ENCODE measurements at regions of chr16 and their contacts with region 1.

Region 1: DNA sequence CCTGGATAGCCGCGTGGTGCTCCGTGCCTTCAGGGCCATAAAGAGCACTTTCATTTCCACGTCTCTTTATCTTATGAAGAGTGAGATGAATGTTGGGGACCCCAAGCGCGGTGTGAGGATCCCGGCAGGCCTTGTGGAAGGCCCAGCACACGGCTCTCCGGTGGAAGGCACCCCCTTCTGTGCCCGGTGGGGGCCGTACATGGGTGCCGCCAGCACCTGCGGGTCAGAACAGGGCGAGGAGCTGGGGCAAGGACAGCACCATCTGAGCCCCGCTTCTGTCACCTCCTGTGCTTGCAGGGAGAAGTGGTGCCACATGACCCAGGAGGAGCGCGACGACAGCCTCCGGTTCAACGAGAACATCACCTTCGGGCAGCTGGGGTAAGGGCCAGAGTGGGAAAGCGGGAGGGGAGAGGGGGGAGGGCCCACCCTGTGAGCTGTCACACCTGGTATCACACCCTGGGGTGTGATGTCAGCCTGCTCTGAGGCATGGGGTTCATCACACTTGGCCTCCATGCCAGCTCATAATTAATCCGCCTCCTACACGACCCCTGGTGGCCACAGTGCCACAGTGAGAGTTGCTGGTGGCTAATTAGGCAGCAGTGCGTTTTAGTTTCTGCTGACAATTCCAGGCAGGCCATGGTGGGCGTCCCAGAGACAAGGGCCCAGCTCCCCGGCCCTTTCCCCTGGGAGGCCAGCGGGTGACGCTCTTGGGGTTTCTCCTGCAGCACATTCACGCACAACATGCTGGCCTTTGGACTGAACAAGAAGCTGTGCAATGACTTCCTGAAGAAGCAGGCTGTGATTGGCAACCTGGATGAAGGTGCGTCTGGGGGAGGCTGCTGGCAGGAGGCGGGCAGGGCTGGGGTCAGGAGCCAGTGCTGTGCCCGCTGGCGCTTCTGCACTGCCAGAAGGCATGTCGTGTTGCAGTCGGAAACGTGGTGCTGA is 25.7 kb downstream of the CIBAR2 start:
- DNase-seq: peak; percentile 80 to 82
- H3K4me3 ChIP-seq: no peak overlapping the region
- H3K4me3 Mint-ChIP-seq: no peak overlapping the region
- H3K27ac Mint-ChIP-seq: no peak overlapping the region
- H3K4me1 ChIP-seq: 0 out of 2 replicates have a peak, but pooled peaks cover 4% of the 10 kb centered on the region
- H3K4me1 Mint-ChIP-seq: no peaks in the 10 kb centered on the region
- H3K27me3 ChIP-seq: no peaks in the 10 kb centered on the region
- H3K27me3 Mint-ChIP-seq: no peaks in the 10 kb centered on the region
- CTCF ChIP-seq: peak; percentile 80 to 84

Region 2: DNA sequence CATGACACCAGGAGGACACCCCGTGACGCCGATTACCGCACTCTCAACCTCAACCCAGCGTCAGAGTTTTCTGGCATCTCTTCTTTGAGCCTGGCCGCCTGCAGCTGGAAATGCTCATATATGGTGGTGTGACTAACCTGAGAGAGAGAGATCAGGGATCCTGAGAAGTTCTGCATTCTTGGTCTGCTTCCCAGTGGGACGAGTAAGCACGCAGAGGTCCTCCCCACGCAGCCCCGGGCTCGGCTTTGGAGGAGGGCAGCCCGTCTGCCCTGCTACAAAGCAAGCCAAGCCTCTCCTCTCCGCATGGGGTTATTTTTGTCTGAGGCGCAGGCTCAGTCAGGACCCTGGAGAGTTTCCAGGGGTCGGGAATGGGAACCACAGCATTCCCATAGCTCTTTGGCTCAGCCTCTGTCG is 250.4 kb before region 1 on chr16:
- CTCF ChIA-PET with region 1: no interaction called
- POLR2A ChIA-PET with region 1: no interaction called
- intact Hi-C with region 1: no loop called
- DNase-seq: no peak
- H3K4me3 ChIP-seq: no peak overlapping the region
- H3K4me3 Mint-ChIP-seq: no peak overlapping the region
- H3K27ac Mint-ChIP-seq: no peak overlapping the region
- H3K4me1 ChIP-seq: no peaks in the 10 kb centered on the region
- H3K4me1 Mint-ChIP-seq: no peaks in the 10 kb centered on the region
- H3K27me3 ChIP-seq: no peaks in the 10 kb centered on the region
- H3K27me3 Mint-ChIP-seq: peaks cover 3% of the 10 kb centered on the region
- CTCF ChIP-seq: no peak

Region 3: DNA sequence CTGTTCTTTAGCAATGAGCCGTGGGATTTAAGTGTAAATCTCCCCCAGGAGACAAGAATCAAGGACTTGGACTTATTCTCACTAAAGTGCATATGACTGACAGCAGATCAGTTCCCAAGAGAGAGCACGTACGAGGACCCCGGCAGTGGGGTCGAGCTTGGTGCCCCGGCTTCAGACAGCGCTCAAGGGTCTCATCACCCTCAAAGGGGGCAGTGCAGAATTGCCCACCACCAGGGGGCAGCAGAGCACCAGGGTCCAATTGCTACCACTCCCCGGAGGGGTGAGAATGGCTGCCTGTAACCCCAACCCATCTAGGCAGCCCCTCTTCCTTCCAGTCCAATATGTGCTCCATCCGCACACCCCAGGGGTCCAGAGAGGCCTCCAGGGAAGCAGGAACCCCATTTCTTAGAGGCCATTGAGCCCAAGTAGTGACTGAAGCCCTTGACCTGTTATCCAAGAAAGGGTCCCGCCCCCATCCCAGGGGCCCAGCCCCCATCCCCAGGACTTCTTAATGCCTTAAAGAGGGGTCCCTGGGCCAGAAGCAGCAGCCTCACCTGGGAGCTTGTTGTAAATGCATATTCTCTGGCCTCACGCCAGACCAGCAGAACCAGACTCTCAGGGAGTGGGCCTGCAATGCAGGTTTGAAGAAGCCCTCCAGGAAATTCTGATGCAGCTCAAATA is 161.4 kb before region 1 on chr16:
- CTCF ChIA-PET with region 1: interaction called, 4 read pairs
- POLR2A ChIA-PET with region 1: no interaction called
- intact Hi-C with region 1: loop called (anchors 1 kb)
- DNase-seq: peak; percentile 76 to 87
- H3K4me3 ChIP-seq: no peak overlapping the region
- H3K4me3 Mint-ChIP-seq: no peak overlapping the region
- H3K27ac Mint-ChIP-seq: no peak overlapping the region
- H3K4me1 ChIP-seq: peaks cover 16% of the 10 kb centered on the region
- H3K4me1 Mint-ChIP-seq: peaks cover 8% of the 10 kb centered on the region
- H3K27me3 ChIP-seq: no peaks in the 10 kb centered on the region
- H3K27me3 Mint-ChIP-seq: no peaks in the 10 kb centered on the region
- CTCF ChIP-seq: peak; percentile 94 to 97

Region 4: GRCh38 chr16:84982434-84982833 is 104.2 kb before region 1 on chr16:
- CTCF ChIA-PET with region 1: interaction called, 15 read pairs
- POLR2A ChIA-PET with region 1: no interaction called
- intact Hi-C with region 1: loop called (anchors 2 kb)
- DNase-seq: peak in 1 of 2 experiments; percentile 27
- H3K4me3 ChIP-seq: no peak overlapping the region
- H3K4me3 Mint-ChIP-seq: no peak overlapping the region
- H3K27ac Mint-ChIP-seq: peak overlapping the region; percentile 11
- H3K4me1 ChIP-seq: no peaks in the 10 kb centered on the region
- H3K4me1 Mint-ChIP-seq: no peaks in the 10 kb centered on the region
- H3K27me3 ChIP-seq: no peaks in the 10 kb centered on the region
- H3K27me3 Mint-ChIP-seq: no peaks in the 10 kb centered on the region
- CTCF ChIP-seq: peak in 1 of 2 experiments; percentile 20

Region 5: GRCh38 chr16:84995663-84996062 is 91.0 kb before region 1 on chr16:
- CTCF ChIA-PET with region 1: interaction called, 16 read pairs
- POLR2A ChIA-PET with region 1: no interaction called
- intact Hi-C with region 1: no loop called
- DNase-seq: no peak
- H3K4me3 ChIP-seq: no peak overlapping the region
- H3K4me3 Mint-ChIP-seq: peak overlapping the region; percentile 62
- H3K27ac Mint-ChIP-seq: peak overlapping the region; percentile 98
- H3K4me1 ChIP-seq: peaks cover 45% of the 10 kb centered on the region
- H3K4me1 Mint-ChIP-seq: peaks cover 45% of the 10 kb centered on the region
- H3K27me3 ChIP-seq: no peaks in the 10 kb centered on the region
- H3K27me3 Mint-ChIP-seq: no peaks in the 10 kb centered on the region
- CTCF ChIP-seq: no peak

Region 6: GRCh38 chr16:85010931-85011845 is 75.4 kb before region 1 on chr16 and contains the start of gene ZDHHC7:
- CTCF ChIA-PET with region 1: interaction called, 12 read pairs
- POLR2A ChIA-PET with region 1: no interaction called
- intact Hi-C with region 1: loop called (anchors 5 kb)
- DNase-seq: peak; percentile 86 to 90
- H3K4me3 ChIP-seq: peak within 1 kb of the TSS; percentile 97
- H3K4me3 Mint-ChIP-seq: peak within 1 kb of the TSS; percentile 100
- H3K27ac Mint-ChIP-seq: peak within 1 kb of the TSS; percentile 94
- H3K4me1 ChIP-seq: peaks cover 33% of the 10 kb centered on the region
- H3K4me1 Mint-ChIP-seq: peaks cover 27% of the 10 kb centered on the region
- H3K27me3 ChIP-seq: no peaks in the 10 kb centered on the region
- H3K27me3 Mint-ChIP-seq: no peaks in the 10 kb centered on the region
- CTCF ChIP-seq: peak in 1 of 2 experiments; percentile 9
- total RNA-seq, gene ZDHHC7: 82.8 and 85.7 TPM in 2 replicates

Region 7: DNA sequence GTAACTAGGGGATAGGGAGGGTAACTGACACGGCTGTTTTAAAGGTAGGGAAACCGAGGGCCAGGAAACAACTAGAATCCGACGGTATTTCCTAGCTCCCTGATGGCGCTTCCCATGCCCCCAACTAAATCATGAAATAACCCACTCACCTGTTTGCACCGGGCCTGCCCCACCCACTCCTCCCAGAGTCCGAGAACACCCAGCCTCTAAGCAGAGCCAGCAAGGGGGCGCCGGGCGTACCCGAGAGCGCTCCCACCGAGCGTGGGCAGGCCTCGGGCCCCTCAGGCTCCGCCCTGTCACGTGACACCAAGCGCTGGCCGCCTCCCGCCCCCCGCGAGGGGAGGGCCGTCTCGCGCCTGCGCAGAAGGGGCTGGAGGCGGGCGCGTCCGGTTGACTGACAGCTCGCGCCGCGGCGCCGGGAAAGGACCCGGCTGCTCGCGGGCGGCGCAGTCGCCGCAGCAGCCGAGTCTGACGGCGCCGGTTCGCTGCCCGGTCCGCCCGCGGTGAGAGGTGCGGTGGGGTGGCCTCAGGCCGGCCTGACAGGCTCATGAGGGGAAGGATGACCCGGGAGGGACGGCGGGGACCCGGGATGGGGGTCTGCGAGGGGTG is 59.2 kb before region 1 on chr16 and contains the start of gene KIAA0513:
- CTCF ChIA-PET with region 1: interaction called, 13 read pairs
- POLR2A ChIA-PET with region 1: no interaction called
- intact Hi-C with region 1: loop called (anchors 1 kb)
- DNase-seq: peak; percentile 95 to 99
- H3K4me3 ChIP-seq: peak within 1 kb of the TSS; percentile 89
- H3K4me3 Mint-ChIP-seq: peak within 1 kb of the TSS; percentile 92
- H3K27ac Mint-ChIP-seq: peak within 1 kb of the TSS; percentile 83
- H3K4me1 ChIP-seq: peaks cover 28% of the 10 kb centered on the region
- H3K4me1 Mint-ChIP-seq: peaks cover 26% of the 10 kb centered on the region
- H3K27me3 ChIP-seq: peaks cover 1% of the 10 kb centered on the region; the same call in 1 of the 2 replicates
- H3K27me3 Mint-ChIP-seq: no peaks in the 10 kb centered on the region
- CTCF ChIP-seq: peak in 1 of 2 experiments; percentile 65
- total RNA-seq, gene KIAA0513: 7.1 and 7.9 TPM in 2 replicates

Region 8: GRCh38 chr16:85055503-85056210 is 31.0 kb before region 1 on chr16:
- CTCF ChIA-PET with region 1: interaction called, 19 read pairs
- POLR2A ChIA-PET with region 1: no interaction called
- intact Hi-C with region 1: loop called (anchors 1 kb)
- DNase-seq: no peak
- H3K4me3 ChIP-seq: no peak overlapping the region
- H3K4me3 Mint-ChIP-seq: no peak overlapping the region
- H3K27ac Mint-ChIP-seq: no peak overlapping the region
- H3K4me1 ChIP-seq: 0 out of 2 replicates have a peak, but pooled peaks cover 4% of the 10 kb centered on the region
- H3K4me1 Mint-ChIP-seq: peaks cover 15% of the 10 kb centered on the region
- H3K27me3 ChIP-seq: no peaks in the 10 kb centered on the region
- H3K27me3 Mint-ChIP-seq: no peaks in the 10 kb centered on the region
- CTCF ChIP-seq: no peak

Region 9: DNA sequence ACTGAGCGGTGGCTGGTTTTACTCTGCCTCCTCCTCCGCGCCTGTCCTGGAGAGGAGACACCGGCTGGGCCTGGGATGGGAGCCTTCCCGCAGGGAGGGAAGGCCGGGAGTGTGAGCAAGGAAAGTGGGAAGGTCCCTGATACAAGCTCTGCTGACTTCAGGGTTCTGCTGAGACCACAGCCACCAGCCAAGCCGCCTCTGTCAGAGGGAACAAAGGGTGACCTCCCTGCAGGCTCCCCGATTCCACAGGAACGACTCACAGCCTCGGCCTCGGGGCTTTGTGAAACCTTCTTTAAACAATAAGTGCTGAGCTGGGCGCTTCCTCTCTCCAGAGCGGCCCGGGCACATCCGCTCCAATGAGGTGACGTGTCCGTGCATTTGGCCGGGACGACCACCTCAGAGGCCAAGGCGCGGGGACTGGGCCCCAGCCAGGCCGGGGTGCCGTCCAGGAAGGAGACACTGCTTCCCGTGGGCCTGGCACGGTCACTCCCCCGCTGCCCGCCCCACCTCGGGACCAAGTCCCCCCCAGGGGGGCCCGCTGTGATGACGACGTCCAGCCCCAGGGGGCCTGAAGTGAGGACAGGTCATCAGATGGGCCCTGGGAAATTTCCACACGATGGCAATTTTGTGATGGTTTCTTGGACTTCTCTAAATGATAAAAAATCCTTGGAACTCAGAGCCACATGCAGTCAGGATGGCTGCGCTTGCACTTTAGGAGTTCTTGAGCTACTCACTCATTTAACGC is 37.4 kb after region 1 on chr16:
- CTCF ChIA-PET with region 1: no interaction called
- POLR2A ChIA-PET with region 1: no interaction called
- intact Hi-C with region 1: no loop called
- DNase-seq: peak in 1 of 2 experiments; percentile 36
- H3K4me3 ChIP-seq: no peak overlapping the region
- H3K4me3 Mint-ChIP-seq: no peak overlapping the region
- H3K27ac Mint-ChIP-seq: no peak overlapping the region
- H3K4me1 ChIP-seq: peaks cover 8% of the 10 kb centered on the region
- H3K4me1 Mint-ChIP-seq: no peaks in the 10 kb centered on the region
- H3K27me3 ChIP-seq: no peaks in the 10 kb centered on the region
- H3K27me3 Mint-ChIP-seq: no peaks in the 10 kb centered on the region
- CTCF ChIP-seq: no peak

Measured in Caco-2 (cell line).